Posterior vena cava (tissue), 2 donors: ENCODE measurements at regions of chr4 and their contacts with region 1.

Region 1: DNA sequence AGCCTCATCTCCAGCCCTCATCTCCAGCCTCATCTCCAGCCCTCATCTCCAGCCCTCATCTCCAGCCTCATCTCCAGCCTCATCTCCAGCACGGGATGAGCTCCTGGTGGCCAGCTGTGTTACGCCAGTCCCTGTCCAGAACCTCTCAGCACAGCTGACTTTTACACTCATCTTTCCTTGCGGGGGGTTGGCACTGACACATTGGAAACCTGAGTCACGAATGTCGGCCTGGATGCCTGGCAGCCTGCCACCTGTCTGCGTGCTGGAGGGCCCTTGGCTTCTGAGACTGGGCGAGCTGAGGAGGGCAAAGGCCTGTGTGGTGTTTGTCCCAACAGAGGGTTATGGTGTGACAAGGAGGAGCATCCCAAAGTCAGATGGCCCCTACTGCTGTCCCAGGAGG is 66.1 kb upstream of the HGFAC start:
- DNase-seq: no peak

Region 2: DNA sequence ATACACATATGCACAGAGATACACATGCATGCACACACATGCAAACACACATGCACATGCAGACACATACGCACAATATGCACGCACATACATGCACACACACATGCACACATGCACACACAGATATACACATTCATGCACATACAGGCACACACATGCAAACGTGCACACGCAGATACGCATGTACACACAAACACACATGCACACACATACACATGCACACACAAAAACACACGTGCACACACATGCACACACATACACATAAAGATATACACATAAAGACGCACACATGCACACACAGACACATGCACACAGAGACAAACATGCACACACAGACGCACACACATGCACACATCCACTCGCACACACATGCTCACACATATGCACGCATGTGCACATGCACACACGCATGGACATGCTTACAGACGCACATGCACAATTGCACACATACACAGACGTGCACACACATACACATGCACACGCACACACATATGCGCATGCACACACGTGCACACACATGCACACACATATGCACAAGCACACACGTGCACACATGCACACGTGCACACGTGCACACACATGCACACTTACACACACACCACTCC is 535.7 kb after region 1 on chr4:
- intact Hi-C with region 1: loop called in 1 of 2 experiments (anchors 2 kb)
- DNase-seq: no peak